H1 (cell line): ENCODE measurements at regions of chr19 and their contacts with region 1.

Region 1: DNA sequence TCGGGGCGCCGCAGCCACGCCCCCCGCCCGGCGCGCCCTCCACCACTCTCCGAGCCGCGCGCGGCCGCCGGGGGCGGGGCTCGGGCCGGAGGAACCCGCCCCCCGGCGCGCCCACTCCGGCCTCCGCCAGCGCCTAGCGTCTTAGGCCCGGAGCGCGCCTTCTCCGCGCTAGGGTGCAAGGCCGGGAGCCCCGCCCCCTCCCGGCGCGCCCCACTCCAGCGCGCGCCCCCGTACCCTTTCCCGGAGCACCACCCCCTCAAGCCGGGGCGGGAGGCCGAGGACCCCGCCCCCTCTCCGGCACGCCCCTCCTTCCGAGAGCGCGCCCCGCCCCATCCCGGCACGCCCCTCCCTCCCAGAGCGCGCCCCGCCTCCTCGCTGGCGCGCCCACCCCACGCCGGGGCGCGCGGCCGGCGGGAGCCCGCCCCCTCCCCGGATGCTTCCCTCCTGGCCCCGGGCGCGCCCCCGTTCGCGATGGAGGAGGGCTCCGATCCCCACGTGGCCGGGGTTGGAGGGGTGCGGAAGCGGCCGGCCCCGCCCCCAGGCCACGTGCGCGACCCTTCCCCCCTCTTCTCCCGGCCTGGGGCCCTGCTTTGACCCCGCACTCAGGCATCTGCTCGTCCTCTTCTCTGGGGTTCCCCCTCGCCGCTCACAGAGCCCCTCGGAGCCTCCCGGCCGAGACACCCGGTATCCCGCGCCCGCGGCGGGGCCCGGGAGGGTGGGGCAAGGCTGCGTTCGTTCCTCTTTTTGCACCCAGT is 524 bp upstream of the KLF16 start:
- DNase-seq: peak in 1 of 2 experiments; percentile 94
- H3K4me3 ChIP-seq: peak overlapping the region; percentile 66 to 96 (median 72)
- H3K27ac ChIP-seq: peak overlapping the region; percentile 75
- H3K4me1 ChIP-seq: peaks cover 0 to 35% (median 23%) of the 10 kb centered on the region in 4 experiments; a peak in 6 of 7 replicates
- H3K27me3 ChIP-seq: peaks cover 0 to 15% (median 6%) of the 10 kb centered on the region in 4 experiments; a peak in 5 of 7 replicates
- CTCF ChIP-seq: no peak
- EP300 ChIP-seq: no peak
- POLR2A ChIP-seq: peak in 1 of 2 experiments; percentile 42; a peak in 1 of 3 replicates
- RAD21 ChIP-seq: no peak

Region 2: GRCh38 chr19:1812469-1813196 is 51.3 kb before region 1 on chr19:
- CTCF ChIA-PET with region 1: no interaction called
- POLR2A ChIA-PET with region 1: no interaction called
- DNase-seq: peak; percentile 93 to 95
- H3K4me3 ChIP-seq: peak overlapping the region; percentile 49 to 69 (median 56)
- H3K27ac ChIP-seq: no peak overlapping the region; the same call in 1 of the 2 replicates
- H3K4me1 ChIP-seq: peaks cover 0 to 2% (median 0%) of the 10 kb centered on the region in 4 experiments; a peak in 3 of 7 replicates
- H3K27me3 ChIP-seq: peaks cover 0 to 3% (median 0%) of the 10 kb centered on the region in 4 experiments; a peak in 3 of 7 replicates
- CTCF ChIP-seq: peak; percentile 80 to 93 (median 84)
- EP300 ChIP-seq: no peak
- POLR2A ChIP-seq: peak in 1 of 2 experiments; percentile 9; a peak in 1 of 3 replicates
- RAD21 ChIP-seq: peak; percentile 86 to 88

Region 3: GRCh38 chr19:1823020-1823419 is 40.9 kb before region 1 on chr19:
- CTCF ChIA-PET with region 1: no interaction called
- POLR2A ChIA-PET with region 1: no interaction called
- DNase-seq: no peak
- H3K4me3 ChIP-seq: no peak overlapping the region
- H3K27ac ChIP-seq: no peak overlapping the region
- H3K4me1 ChIP-seq: peaks cover 0 to 12% (median 7%) of the 10 kb centered on the region in 4 experiments; a peak in 6 of 7 replicates
- H3K27me3 ChIP-seq: no peaks in the 10 kb centered on the region
- CTCF ChIP-seq: no peak
- EP300 ChIP-seq: no peak
- POLR2A ChIP-seq: no peak
- RAD21 ChIP-seq: no peak

Region 4: DNA sequence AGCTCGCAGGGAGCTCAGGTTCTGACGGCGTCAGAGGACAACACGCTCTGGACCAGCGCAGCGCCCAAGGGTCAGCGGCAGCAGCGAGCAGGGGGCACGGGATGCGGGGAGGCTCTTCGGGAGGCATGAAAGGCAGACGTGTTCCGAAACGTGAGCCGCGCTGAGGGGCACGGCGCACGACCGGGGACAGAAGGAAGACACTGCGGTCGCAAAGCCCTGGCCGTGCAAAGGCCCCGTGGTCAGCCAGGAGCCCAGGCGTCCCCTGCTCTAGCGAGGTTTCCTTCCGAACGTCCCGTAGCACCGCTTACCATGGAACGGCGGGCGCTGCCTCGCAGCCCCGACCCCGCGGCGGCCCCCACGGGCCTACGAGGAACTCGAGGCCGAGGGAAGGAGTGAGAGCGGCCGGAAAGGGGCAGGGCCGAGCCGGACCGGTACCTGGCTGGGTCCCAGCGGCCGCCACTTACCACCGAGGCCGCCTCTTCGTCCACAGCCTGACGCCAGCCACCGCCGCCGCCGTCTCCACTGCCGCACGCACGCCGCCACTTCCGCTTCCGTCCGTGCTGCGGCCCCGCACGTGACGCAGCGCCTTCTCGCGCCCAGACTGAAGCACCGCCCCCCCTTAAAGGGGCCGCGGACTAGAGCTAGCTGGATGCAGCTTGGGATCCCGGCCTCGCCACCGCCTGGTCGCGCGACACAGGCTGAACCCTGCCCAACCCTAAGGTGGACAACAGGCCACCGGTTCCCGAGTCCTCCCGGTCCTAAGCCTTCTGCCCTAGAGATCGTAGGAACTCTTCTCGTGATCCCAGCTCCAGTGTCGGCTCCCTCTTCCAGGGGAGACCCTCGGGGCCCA is 12.0 kb after region 1 on chr19:
- CTCF ChIA-PET with region 1: interaction called, 12 read pairs
- POLR2A ChIA-PET with region 1: interaction called, 13 read pairs
- DNase-seq: peak in 1 of 2 experiments; percentile 88
- H3K4me3 ChIP-seq: peak overlapping the region; percentile 86 to 91 (median 88)
- H3K27ac ChIP-seq: peak overlapping the region; percentile 48; the same call in 1 of the 2 replicates
- H3K4me1 ChIP-seq: peaks cover 0 to 7% (median 2%) of the 10 kb centered on the region in 4 experiments; a peak in 5 of 7 replicates
- H3K27me3 ChIP-seq: no peaks in the 10 kb centered on the region
- CTCF ChIP-seq: no peak; a peak in 1 of 4 replicates
- EP300 ChIP-seq: no peak
- POLR2A ChIP-seq: peak in 1 of 2 experiments; percentile 90; a peak in 2 of 3 replicates
- RAD21 ChIP-seq: no peak

Region 5: DNA sequence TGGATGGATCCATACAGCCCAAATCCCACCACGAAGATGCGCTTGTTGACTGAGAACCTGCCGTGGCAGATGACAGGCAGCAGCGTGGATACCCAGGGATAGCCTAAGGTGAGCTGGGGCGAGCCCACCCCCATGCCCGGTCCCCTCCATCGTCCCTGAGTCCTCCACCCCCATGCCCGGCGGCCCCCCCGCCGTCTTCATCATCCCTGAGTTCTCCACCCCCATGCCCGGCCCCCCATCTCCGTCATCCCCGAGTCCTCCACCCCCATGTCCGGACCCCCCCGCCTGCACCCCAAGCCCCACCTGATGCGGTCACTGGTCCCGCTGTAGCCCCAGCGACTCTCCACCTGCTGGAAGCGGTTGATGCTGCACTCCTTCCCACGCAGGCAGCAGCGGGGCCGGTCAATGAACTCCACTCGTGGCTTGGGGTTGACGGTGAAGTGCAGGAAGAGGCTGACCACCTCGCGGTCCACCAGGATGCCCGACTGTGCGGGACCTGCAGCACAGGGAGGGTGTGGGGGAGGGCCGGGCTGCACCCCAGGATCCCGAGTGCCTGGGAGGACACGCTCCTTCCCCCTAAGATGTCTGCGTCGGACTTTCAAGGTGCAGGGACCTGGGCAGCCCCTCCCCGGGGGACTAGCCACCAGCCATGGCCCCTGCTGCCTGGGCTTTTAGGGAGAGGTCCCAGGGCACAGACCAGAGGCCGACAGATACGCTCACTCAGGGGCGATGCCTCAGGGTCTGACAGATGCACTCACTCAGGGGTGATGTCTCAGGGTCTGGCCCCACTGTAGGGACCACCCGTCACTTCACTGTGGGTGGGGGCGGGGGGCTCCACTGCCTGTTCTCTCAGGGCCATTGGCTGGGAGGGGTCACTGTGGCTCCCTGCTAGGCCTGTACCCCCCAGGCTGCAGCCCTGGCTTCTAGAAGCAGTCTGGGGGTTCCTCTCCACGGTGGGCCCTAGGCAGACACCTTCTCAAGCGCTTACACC is 123.6 kb after region 1 on chr19:
- CTCF ChIA-PET with region 1: no interaction called
- POLR2A ChIA-PET with region 1: no interaction called
- DNase-seq: no peak
- H3K4me3 ChIP-seq: no peak overlapping the region
- H3K27ac ChIP-seq: no peak overlapping the region
- H3K4me1 ChIP-seq: no peaks in the 10 kb centered on the region
- H3K27me3 ChIP-seq: no peaks in the 10 kb centered on the region
- CTCF ChIP-seq: peak in 1 of 3 experiments; percentile 21; a peak in 1 of 4 replicates
- EP300 ChIP-seq: no peak
- POLR2A ChIP-seq: no peak
- RAD21 ChIP-seq: no peak; a peak in 1 of 4 replicates

Region 6: GRCh38 chr19:2221918-2222317 is 358.0 kb after region 1 on chr19:
- CTCF ChIA-PET with region 1: no interaction called
- POLR2A ChIA-PET with region 1: no interaction called
- DNase-seq: no peak
- H3K4me3 ChIP-seq: no peak overlapping the region
- H3K27ac ChIP-seq: no peak overlapping the region
- H3K4me1 ChIP-seq: no peaks in the 10 kb centered on the region
- H3K27me3 ChIP-seq: no peaks in the 10 kb centered on the region
- CTCF ChIP-seq: peak in 1 of 3 experiments; percentile 3; a peak in 1 of 4 replicates
- EP300 ChIP-seq: no peak
- POLR2A ChIP-seq: no peak
- RAD21 ChIP-seq: peak in 1 of 2 experiments; percentile 15; a peak in 1 of 4 replicates